Ovary (tissue), 10 donors: ENCODE measurements at regions of chrX and their contacts with region 1.

Region 1: GRCh38 chrX:132489578-132490419 is 961 bp upstream of the MBNL3 start:
- DNase-seq: peak; percentile 20 to 55 (median 34)
- H3K4me3 ChIP-seq: peak overlapping the region; percentile 52
- H3K27ac ChIP-seq: peak overlapping the region; percentile 67 to 74
- H3K4me1 ChIP-seq: no peaks in the 10 kb centered on the region
- H3K27me3 ChIP-seq: no peaks in the 10 kb centered on the region
- CTCF ChIP-seq: no peak
- EP300 ChIP-seq: no peak
- POLR2A ChIP-seq: no peak

Region 2: DNA sequence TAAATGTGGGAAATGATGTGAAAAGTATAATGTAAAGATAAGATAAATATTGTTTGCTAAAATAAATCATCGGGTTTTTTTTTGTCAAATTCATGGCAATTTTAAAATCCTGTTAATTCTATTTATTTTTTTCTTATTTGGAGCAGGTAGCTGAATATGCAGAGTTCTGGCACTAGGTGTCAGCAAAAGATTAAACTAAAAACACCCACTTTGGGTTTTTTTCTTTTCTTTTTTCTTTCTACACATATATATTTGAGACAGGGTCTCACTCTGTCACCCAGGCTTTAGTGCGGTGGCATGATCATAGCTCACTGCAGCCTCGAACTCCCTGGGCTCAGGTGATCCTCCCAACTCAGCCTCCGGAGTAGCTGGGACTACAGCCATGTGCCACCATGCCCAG is 263.6 kb before region 1 on chrX:
- intact Hi-C with region 1: loop called in 1 of 4 experiments (anchors 5 kb)
- DNase-seq: no peak
- H3K4me3 ChIP-seq: no peak overlapping the region
- H3K27ac ChIP-seq: no peak overlapping the region
- H3K4me1 ChIP-seq: no peaks in the 10 kb centered on the region
- H3K27me3 ChIP-seq: no peaks in the 10 kb centered on the region
- CTCF ChIP-seq: no peak
- EP300 ChIP-seq: no peak
- POLR2A ChIP-seq: no peak

Region 3: GRCh38 chrX:132435222-132435621 is 54.6 kb before region 1 on chrX:
- intact Hi-C with region 1: loop called in 1 of 4 experiments (anchors 10 kb)
- DNase-seq: no peak
- H3K4me3 ChIP-seq: no peak overlapping the region
- H3K27ac ChIP-seq: no peak overlapping the region
- H3K4me1 ChIP-seq: no peaks in the 10 kb centered on the region
- H3K27me3 ChIP-seq: no peaks in the 10 kb centered on the region
- CTCF ChIP-seq: no peak
- EP300 ChIP-seq: no peak
- POLR2A ChIP-seq: no peak